ENCODE measurements at regions of chr1 and their contacts with region 1.

Region 1: GRCh38 chr1:171984850-171985485 is 143.7 kb downstream of the DNM3 start:
- DNase-seq: no peak
- ATAC-seq: peak; percentile 50 to 61
- H3K4me3 ChIP-seq: no peak overlapping the region
- H3K27ac ChIP-seq: no peak overlapping the region
- H3K4me1 ChIP-seq: no peaks in the 10 kb centered on the region
- H3K27me3 ChIP-seq: no peaks in the 10 kb centered on the region

Region 2: GRCh38 chr1:171644805-171645483 is 340.0 kb before region 1 on chr1:
- intact Hi-C with region 1: loop called in 3 of 4 experiments (anchors 10 kb)
- DNase-seq: peak; percentile 77 to 89 (median 81)
- ATAC-seq: peak; percentile 82 to 89
- H3K4me3 ChIP-seq: no peak overlapping the region
- H3K27ac ChIP-seq: peak overlapping the region; percentile 16
- H3K4me1 ChIP-seq: peaks cover 4% of the 10 kb centered on the region
- H3K27me3 ChIP-seq: no peaks in the 10 kb centered on the region

Region 3: DNA sequence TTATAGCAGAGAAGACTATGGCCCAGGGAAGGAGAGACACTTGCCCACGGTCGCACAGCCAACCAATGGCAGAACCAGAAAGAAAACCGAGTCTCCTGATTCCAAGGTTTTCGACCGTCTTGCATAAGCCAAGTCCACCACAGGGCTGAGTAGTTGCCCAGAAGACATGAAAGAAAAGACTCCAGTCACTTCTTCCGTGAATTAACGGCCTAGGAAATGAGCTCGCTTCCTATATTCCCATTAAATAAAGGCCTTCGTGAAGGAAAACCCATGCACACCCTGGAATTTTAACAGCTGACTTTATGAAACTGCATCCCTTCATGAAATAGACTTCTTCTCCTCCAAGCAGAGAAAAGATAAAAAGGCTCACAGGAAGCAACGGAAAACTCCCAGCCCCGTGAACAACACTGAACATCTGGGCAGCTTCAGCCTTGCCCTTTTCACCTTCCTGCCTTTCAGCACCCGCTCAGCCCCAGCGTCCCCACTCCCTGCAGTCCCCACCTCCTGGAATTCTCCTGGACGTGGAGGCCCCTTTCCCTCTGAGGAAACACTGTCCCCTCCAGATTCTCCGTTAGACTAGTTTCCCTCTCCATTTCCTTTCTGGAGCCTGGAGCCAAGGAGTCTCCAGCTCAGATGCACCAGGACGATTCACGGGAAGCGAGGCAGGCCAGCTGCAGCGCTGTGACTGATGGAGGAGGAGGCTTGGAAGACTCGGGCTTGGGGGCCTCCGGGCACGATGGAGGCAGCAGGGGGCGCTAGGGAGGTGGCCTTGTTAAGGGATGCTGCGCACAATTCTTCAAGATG is 329.8 kb before region 1 on chr1:
- intact Hi-C with region 1: loop called in 1 of 4 experiments (anchors 10 kb)
- DNase-seq: peak; percentile 87 to 95 (median 95)
- ATAC-seq: peak; percentile 88 to 93
- H3K4me3 ChIP-seq: no peak overlapping the region
- H3K27ac ChIP-seq: peak overlapping the region; percentile 44
- H3K4me1 ChIP-seq: peaks cover 3% of the 10 kb centered on the region
- H3K27me3 ChIP-seq: no peaks in the 10 kb centered on the region

Region 4: DNA sequence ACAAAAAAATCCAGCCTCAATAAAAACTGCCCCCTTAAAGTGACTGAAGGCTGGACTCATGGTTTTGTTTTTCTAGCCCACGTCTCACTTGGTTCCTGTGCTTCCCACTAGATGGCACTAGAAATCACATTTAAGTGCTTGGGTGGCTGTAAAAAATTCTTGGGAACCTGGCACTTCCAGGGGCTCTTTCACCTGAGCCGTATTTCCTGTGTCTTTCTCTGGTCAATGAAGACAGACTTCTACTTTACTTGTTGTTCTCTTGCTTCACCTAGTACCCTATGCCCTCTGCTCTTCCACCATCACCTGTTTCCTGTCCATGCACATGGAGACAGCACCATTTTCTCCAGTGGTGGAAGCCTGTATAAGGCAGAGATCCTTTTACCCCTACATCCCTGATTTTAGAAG is 183.5 kb before region 1 on chr1:
- intact Hi-C with region 1: loop called (anchors 2 to 5 kb)
- DNase-seq: no peak
- ATAC-seq: no peak
- H3K4me3 ChIP-seq: no peak overlapping the region
- H3K27ac ChIP-seq: no peak overlapping the region
- H3K4me1 ChIP-seq: no peaks in the 10 kb centered on the region
- H3K27me3 ChIP-seq: no peaks in the 10 kb centered on the region

Region 5: DNA sequence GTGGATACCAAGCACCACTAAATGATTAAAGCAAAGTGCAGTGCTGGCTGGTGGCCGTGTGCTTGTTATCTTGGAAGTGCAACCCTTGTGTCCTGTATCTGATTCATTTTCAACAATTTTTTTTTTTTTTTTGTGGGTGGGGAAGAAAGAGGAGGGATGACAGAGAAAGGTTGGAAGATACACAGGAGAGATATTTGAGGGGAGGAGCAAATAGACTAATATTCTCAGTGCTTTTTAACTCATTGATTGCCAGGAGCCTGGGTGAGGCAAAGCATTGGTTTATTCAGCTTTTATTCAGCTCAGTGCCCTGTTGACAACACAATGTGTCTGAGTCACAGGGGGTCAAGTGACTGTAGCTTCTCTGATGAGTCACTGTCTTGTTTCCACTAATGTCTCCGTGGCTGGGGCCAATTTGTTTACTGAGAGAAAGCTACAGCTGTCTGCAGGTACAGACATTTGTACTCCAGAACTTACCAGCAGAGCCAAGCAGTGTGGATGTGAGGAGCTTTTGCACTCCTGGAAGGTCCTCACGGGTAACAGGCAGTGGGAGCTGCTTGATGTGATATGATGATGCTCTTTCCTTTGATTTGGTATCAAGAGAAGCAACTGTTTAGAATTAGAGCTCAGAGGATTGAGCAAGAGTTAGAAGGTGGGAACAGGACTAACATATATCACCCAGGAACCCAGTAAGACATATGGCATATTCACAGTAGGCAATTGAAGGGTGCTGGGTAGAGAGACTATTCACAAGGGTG is 167.3 kb before region 1 on chr1:
- intact Hi-C with region 1: loop called in 1 of 4 experiments (anchors 5 kb)
- DNase-seq: no peak
- ATAC-seq: peak in 1 of 2 donors; percentile 59
- H3K4me3 ChIP-seq: no peak overlapping the region
- H3K27ac ChIP-seq: no peak overlapping the region
- H3K4me1 ChIP-seq: no peaks in the 10 kb centered on the region
- H3K27me3 ChIP-seq: no peaks in the 10 kb centered on the region

Measured in right cardiac atrium (tissue), 5 donors.